GM13976 (cell line): ENCODE measurements at regions of chr14 and their contacts with region 1.

Region 1: DNA sequence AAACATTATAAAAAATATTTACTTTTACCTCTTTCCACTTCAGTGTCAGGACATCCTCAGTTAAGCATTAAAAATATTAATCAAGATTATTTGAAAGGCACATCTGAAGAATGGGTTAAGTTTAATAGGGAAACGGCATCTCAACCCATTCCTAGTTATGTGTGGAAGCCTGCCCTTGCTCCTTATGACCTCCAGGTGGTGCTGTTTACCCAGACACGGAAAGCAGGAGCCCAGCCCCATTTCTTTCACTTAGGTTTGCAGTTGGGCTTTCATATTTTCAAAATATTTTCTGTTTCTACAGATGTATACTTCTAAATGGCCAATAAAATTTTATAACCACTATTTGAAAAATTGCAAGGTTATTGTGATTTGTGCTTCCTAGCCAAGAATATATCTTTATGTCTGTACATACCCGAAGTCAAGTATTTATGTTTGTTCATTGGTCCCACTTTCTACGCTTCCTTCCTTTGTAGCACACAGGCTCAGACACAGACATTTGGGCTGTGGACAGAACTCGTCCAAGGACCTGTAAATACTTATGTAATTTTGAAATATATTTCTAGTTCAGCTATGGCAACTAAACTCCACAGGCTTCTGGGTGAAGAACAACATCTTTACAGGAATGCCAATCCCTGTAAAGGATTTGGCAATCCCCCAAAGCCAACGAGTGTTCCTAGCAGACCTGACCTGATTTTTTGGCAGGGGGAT is 247.1 kb downstream of the AKAP6 start:
- DNase-seq: peak; percentile 26
- CTCF ChIP-seq: peak; percentile 92

Region 2: DNA sequence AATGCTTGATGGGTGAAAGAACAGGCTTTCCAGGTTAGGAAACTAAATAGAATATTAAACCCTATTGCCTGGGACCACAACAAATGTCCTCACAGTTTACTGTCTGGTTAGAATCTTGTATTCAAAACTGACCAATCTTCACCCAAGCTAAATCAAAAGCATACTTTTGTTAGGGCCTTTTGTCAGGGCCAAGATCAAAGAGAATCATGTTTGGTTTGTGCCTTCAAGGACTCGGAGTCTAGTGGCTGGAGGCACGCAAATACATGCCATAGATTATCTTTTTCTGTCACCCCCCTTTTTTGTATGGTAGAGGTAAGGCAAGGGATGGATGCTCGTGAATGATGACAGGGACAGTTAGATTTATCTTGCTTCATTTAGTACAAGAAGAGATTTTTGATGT is 298.2 kb before region 1 on chr14:
- in situ Hi-C with region 1: no loop called
- DNase-seq: no peak
- CTCF ChIP-seq: no peak

Region 3: DNA sequence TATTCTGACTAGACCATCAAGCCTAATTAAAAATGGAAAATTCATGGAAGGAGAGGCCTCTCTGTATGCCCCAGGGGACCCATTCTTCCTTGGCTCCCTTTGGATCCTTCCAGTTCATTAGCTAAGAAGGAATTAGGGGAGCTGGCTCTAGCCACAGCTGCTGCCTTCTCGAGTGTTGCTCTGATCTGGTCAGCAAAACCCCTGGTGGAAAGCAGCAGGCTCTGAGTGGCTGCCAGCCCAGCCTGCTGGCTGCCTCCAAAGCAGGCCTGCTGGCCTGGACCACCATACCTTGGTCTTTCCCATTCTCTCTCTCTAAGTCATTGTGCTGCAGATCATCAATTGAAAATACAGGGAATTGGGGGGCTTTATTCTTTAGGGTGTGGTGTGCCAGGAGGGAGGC is 276.1 kb before region 1 on chr14:
- in situ Hi-C with region 1: no loop called
- DNase-seq: no peak
- CTCF ChIP-seq: no peak

Region 4: DNA sequence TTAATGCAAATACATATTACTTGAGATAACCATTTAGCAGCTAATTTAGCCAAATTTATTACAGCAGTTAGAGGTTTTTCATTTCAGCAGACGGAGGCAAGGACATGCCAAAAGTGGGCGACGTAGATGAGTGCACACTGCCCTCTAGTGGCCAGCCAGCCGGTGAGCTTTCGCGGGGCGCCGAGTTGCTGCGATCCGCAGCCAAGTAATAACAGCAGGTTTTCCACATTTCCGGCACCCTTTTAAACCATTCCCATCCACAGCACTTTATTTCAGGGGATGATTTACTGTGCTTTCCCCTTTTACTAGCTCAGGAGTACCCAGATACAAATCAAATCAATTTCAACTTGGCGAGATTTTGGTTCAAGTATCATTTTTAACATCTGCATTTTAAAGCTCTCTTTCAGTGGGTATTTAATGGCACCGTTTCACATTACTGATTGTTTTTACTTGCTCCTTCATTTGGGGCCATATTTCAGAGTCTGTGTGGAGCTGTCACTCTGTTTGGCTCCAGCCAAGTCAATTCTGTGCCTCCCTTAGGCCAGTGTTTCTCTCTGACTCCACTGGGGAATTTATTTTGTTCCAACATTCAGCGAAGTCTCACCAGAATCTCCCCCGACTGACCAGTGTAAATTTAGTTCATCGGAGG is 1216.6 kb after region 1 on chr14:
- in situ Hi-C with region 1: loop called (anchors 10 kb)
- DNase-seq: peak; percentile 77
- CTCF ChIP-seq: peak; percentile 88